Natural killer cell (primary cell): ENCODE measurements at regions of chr20 and their contacts with region 1.

Region 1: GRCh38 chr20:49219089-49219923 is at the start of gene DDX27:
- DNase-seq: peak; percentile 97 to 100
- ATAC-seq: peak; percentile 88 to 93 (median 92)
- H3K4me3 ChIP-seq: peak within 1 kb of the TSS; percentile 91
- H3K4me3 Mint-ChIP-seq: peak within 1 kb of the TSS; percentile 96
- H3K27ac ChIP-seq: peak within 1 kb of the TSS; percentile 96
- H3K27ac Mint-ChIP-seq: peak within 1 kb of the TSS; percentile 94 to 96
- H3K4me1 ChIP-seq: peaks cover 23% of the 10 kb centered on the region
- H3K4me1 Mint-ChIP-seq: peaks cover 27 to 32% of the 10 kb centered on the region in 2 donors
- H3K27me3 ChIP-seq: no peaks in the 10 kb centered on the region
- H3K27me3 Mint-ChIP-seq: no peaks in the 10 kb centered on the region
- CTCF ChIP-seq: no peak
- total RNA-seq, gene DDX27: 71.5 to 91.3 (median 75.9) TPM

Region 2: GRCh38 chr20:49132995-49133478 is 86.3 kb before region 1 on chr20:
- intact Hi-C with region 1: loop called (anchors 1 kb)
- DNase-seq: peak in 1 of 2 donors; percentile 78
- ATAC-seq: peak in 2 of 3 donors; percentile 64 to 72
- H3K4me3 ChIP-seq: no peak overlapping the region
- H3K4me3 Mint-ChIP-seq: no peak overlapping the region
- H3K27ac ChIP-seq: no peak overlapping the region
- H3K27ac Mint-ChIP-seq: peak overlapping the region; percentile 4 to 9
- H3K4me1 ChIP-seq: no peaks in the 10 kb centered on the region
- H3K4me1 Mint-ChIP-seq: peaks cover 6 to 7% of the 10 kb centered on the region in 2 donors
- H3K27me3 ChIP-seq: no peaks in the 10 kb centered on the region
- H3K27me3 Mint-ChIP-seq: no peaks in the 10 kb centered on the region
- CTCF ChIP-seq: peak; percentile 53

Region 3: GRCh38 chr20:49186535-49187329 is 32.6 kb before region 1 on chr20:
- intact Hi-C with region 1: loop called (anchors 1 kb)
- DNase-seq: peak; percentile 37 to 83
- ATAC-seq: peak in 2 of 3 donors; percentile 11 to 22
- H3K4me3 ChIP-seq: peak overlapping the region; percentile 42
- H3K4me3 Mint-ChIP-seq: peak overlapping the region; percentile 92
- H3K27ac ChIP-seq: peak overlapping the region; percentile 82
- H3K27ac Mint-ChIP-seq: peak overlapping the region; percentile 86
- H3K4me1 ChIP-seq: peaks cover 16% of the 10 kb centered on the region
- H3K4me1 Mint-ChIP-seq: peaks cover 48 to 53% of the 10 kb centered on the region in 2 donors
- H3K27me3 ChIP-seq: no peaks in the 10 kb centered on the region
- H3K27me3 Mint-ChIP-seq: peaks cover 0 to 3% of the 10 kb centered on the region in 2 donors
- CTCF ChIP-seq: no peak

Region 4: DNA sequence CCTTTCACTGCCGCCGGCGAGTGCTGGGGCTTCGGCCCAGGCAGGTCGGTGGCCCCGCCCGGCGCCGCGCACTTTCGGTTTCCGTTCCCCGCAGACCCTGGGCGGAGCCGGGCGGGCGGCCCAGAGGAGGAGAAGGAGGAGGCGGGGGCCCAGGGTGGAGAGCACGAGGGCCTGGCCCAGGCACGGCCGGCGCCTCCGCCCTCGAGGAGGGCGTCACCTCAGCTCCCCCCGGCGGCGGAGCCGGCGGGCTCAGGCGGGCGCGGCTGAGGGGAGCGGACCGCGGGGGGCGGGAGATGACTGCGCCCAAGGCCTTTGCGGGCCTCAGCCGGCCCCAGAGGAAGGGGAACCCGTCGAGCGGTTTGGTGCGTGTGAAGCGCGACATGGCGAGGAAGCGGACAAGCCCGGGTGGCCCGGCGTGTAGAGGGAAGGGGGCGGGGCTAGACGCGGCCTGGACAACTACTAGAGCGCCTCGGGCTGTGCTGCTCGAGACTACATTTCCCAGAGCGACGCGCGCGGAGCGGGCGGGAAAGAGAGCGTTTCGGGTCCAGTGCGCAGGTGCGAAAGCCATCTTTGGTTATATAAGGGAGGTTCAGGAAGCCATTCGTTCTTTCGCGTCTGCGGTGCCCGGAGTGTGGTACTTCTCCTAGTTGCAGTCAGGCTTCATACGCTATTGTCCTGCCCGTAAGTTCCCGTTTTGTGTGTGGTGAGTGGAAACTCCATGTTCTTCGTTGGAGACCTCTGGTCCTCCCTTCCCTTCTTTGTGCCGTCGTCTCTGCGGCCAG is 58.9 kb after region 1 on chr20 and contains the start of gene ZNFX1:
- intact Hi-C with region 1: loop called (anchors 1 kb)
- DNase-seq: peak; percentile 97 to 99
- ATAC-seq: peak; percentile 83 to 95 (median 86)
- H3K4me3 ChIP-seq: peak within 1 kb of the TSS; percentile 76
- H3K4me3 Mint-ChIP-seq: peak within 1 kb of the TSS; percentile 97
- H3K27ac ChIP-seq: peak within 1 kb of the TSS; percentile 90
- H3K27ac Mint-ChIP-seq: peak within 1 kb of the TSS; percentile 94 to 95
- H3K4me1 ChIP-seq: peaks cover 58% of the 10 kb centered on the region
- H3K4me1 Mint-ChIP-seq: peaks cover 69 to 81% of the 10 kb centered on the region in 2 donors
- H3K27me3 ChIP-seq: no peaks in the 10 kb centered on the region
- H3K27me3 Mint-ChIP-seq: no peaks in the 10 kb centered on the region
- CTCF ChIP-seq: no peak
- total RNA-seq, gene ZNFX1: 55.8 to 58.5 (median 57.8) TPM

Region 5: DNA sequence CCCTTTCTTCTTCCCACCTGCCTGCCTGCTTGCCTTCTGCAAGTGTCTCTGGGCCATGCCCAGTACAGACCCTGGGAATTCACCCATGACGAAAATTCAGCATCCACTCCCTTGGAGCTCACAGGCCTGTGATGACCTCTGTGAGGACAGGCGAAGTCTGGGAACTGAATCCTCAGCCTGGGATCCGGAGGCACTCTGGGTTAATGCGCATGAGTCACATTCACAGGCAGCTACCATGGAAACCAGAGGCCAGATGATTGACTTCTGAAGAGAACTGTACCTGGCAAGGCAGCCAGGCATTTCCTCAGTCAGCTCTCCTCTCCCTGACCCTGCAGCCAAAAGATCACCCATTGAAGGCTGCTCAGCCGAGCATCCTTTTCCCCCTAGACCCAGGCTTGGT is 634.3 kb after region 1 on chr20:
- intact Hi-C with region 1: no loop called
- DNase-seq: no peak
- ATAC-seq: no peak
- H3K4me3 ChIP-seq: no peak overlapping the region
- H3K4me3 Mint-ChIP-seq: no peak overlapping the region
- H3K27ac ChIP-seq: no peak overlapping the region
- H3K27ac Mint-ChIP-seq: no peak overlapping the region
- H3K4me1 ChIP-seq: no peaks in the 10 kb centered on the region
- H3K4me1 Mint-ChIP-seq: peaks cover 0 to 6% of the 10 kb centered on the region in 2 donors
- H3K27me3 ChIP-seq: no peaks in the 10 kb centered on the region
- H3K27me3 Mint-ChIP-seq: no peaks in the 10 kb centered on the region
- CTCF ChIP-seq: no peak